MCF 10A (cell line): ENCODE measurements at regions of chr10 and their contacts with region 1.

Region 1: GRCh38 chr10:83871187-83872081 is 267.9 kb upstream of the GHITM start:
- DNase-seq: peak; percentile 83
- H3K4me3 Mint-ChIP-seq: no peak overlapping the region
- H3K27ac Mint-ChIP-seq: no peak overlapping the region
- H3K4me1 Mint-ChIP-seq: no peaks in the 10 kb centered on the region
- H3K27me3 Mint-ChIP-seq: no peaks in the 10 kb centered on the region
- CTCF ChIP-seq: peak; percentile 94

Region 2: GRCh38 chr10:82221601-82222150 is 1649.8 kb before region 1 on chr10:
- CTCF ChIA-PET with region 1: interaction called, 3 read pairs
- POLR2A ChIA-PET with region 1: no interaction called
- intact Hi-C with region 1: loop called (anchors 1 kb)
- DNase-seq: peak; percentile 48
- H3K4me3 Mint-ChIP-seq: no peak overlapping the region
- H3K27ac Mint-ChIP-seq: no peak overlapping the region
- H3K4me1 Mint-ChIP-seq: peaks cover 6% of the 10 kb centered on the region
- H3K27me3 Mint-ChIP-seq: no peaks in the 10 kb centered on the region
- CTCF ChIP-seq: no peak

Region 3: GRCh38 chr10:82969405-82969804 is 902.0 kb before region 1 on chr10:
- CTCF ChIA-PET with region 1: interaction called, 25 read pairs
- POLR2A ChIA-PET with region 1: no interaction called
- intact Hi-C with region 1: loop called (anchors 1 kb)
- DNase-seq: peak; percentile 24
- H3K4me3 Mint-ChIP-seq: no peak overlapping the region
- H3K27ac Mint-ChIP-seq: no peak overlapping the region
- H3K4me1 Mint-ChIP-seq: no peaks in the 10 kb centered on the region
- H3K27me3 Mint-ChIP-seq: no peaks in the 10 kb centered on the region
- CTCF ChIP-seq: peak; percentile 50

Region 4: DNA sequence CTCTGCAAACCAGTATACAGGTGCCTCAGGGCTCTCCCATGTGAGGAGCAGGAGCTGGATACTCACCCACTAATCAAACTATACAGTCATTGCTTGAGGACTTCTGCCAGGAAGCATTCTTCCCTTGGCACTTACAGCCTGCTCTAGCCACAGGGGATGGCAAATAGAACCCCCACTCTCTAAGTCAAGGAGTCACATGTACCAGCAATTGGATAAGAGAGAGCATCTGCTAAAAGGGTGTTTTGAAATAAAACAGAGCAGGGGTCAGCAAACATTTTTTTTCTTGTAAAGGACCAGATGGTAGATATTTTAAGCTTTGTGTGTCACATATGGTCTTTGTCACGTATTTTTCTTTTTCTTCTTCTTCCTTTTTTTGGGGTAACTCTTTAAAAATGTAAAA is 597.3 kb before region 1 on chr10:
- CTCF ChIA-PET with region 1: interaction called, 10 read pairs
- POLR2A ChIA-PET with region 1: no interaction called
- intact Hi-C with region 1: no loop called
- DNase-seq: peak; percentile 2
- H3K4me3 Mint-ChIP-seq: no peak overlapping the region
- H3K27ac Mint-ChIP-seq: no peak overlapping the region
- H3K4me1 Mint-ChIP-seq: no peaks in the 10 kb centered on the region
- H3K27me3 Mint-ChIP-seq: no peaks in the 10 kb centered on the region
- CTCF ChIP-seq: no peak

Region 5: GRCh38 chr10:83507610-83508009 is 363.8 kb before region 1 on chr10:
- CTCF ChIA-PET with region 1: no interaction called
- POLR2A ChIA-PET with region 1: no interaction called
- intact Hi-C with region 1: no loop called
- DNase-seq: no peak
- H3K4me3 Mint-ChIP-seq: no peak overlapping the region
- H3K27ac Mint-ChIP-seq: no peak overlapping the region
- H3K4me1 Mint-ChIP-seq: no peaks in the 10 kb centered on the region
- H3K27me3 Mint-ChIP-seq: no peaks in the 10 kb centered on the region
- CTCF ChIP-seq: no peak

Region 6: DNA sequence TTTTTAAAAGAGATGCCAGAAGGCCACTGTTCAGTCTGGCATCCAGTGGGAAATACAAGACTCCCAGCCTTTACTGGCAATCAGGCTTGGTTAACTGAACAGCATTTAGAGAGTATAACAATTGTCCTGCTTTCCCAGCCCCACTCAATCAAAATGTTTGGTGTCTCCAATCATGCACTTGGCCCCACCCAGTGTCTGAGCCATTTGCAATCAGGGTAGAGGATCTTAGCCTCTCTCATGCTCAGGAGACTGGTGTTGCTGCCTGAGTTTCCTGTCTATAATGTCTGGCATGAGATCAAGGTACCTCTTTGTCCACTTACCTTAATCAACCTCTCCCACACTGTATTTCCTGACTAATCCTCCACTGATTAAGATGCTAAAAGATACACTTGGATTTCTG is 22.3 kb before region 1 on chr10:
- CTCF ChIA-PET with region 1: interaction called, 11 read pairs
- POLR2A ChIA-PET with region 1: interaction called, 3 read pairs
- intact Hi-C with region 1: no loop called
- DNase-seq: peak; percentile 8
- H3K4me3 Mint-ChIP-seq: no peak overlapping the region
- H3K27ac Mint-ChIP-seq: no peak overlapping the region
- H3K4me1 Mint-ChIP-seq: peaks cover 13% of the 10 kb centered on the region
- H3K27me3 Mint-ChIP-seq: no peaks in the 10 kb centered on the region
- CTCF ChIP-seq: no peak

Region 7: DNA sequence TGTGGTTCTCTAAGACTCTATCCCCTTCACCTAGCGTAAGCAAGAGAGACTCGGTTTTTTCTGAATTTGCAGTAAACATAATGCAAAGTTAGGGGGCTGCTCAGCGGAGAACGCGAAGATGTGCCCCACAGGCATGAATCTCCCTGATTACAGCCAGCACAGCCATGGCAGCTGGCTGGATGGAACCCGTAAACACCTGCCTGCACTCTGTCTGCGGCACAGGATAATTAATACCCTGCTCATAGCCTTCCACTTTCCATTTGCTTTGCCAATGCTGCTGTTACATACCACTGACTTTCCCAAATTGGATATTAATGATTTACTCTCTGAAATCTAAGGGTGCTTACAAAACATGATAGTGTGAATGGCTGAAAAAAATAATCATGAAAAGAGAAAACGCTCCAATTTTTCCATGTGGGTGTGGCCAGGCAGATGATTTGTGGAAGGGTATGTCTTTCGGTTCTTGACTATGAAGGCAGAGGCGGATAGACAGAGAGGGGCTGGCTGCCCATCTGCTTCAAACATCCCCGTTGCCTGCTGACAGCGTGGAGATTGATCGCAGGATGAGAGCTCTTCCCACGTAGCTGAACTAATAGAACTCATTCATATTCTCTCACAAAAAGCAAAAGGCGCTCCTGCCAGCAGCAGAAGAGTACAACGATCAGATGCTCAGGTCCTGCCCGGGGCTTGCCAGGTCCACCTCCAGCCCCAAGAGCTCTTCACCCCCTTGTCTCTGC is 74.7 kb after region 1 on chr10:
- CTCF ChIA-PET with region 1: no interaction called
- POLR2A ChIA-PET with region 1: no interaction called
- intact Hi-C with region 1: no loop called
- DNase-seq: no peak
- H3K4me3 Mint-ChIP-seq: no peak overlapping the region
- H3K27ac Mint-ChIP-seq: no peak overlapping the region
- H3K4me1 Mint-ChIP-seq: no peaks in the 10 kb centered on the region
- H3K27me3 Mint-ChIP-seq: no peaks in the 10 kb centered on the region
- CTCF ChIP-seq: no peak

Region 8: GRCh38 chr10:84097787-84098353 is 226.4 kb after region 1 on chr10:
- CTCF ChIA-PET with region 1: interaction called, 5 read pairs
- POLR2A ChIA-PET with region 1: no interaction called
- intact Hi-C with region 1: loop called (anchors 1 kb)
- DNase-seq: peak; percentile 28
- H3K4me3 Mint-ChIP-seq: no peak overlapping the region
- H3K27ac Mint-ChIP-seq: no peak overlapping the region
- H3K4me1 Mint-ChIP-seq: no peaks in the 10 kb centered on the region
- H3K27me3 Mint-ChIP-seq: no peaks in the 10 kb centered on the region
- CTCF ChIP-seq: peak; percentile 59